Dorsolateral prefrontal cortex (tissue), 120 donors: ENCODE measurements at regions of chr9 and their contacts with region 1.

Region 1: GRCh38 chr9:37913480-37914153 is 9.7 kb upstream of the SLC25A51 start:
- DNase-seq: peak; percentile 76 to 96 (median 85)
- H3K4me3 ChIP-seq: peak overlapping the region in 2 of 59 donors; percentile 3 to 24
- H3K27ac ChIP-seq: peak overlapping the region in 40 of 59 donors; percentile 6 to 83 (median 51)
- H3K27me3 ChIP-seq: no peaks in the 10 kb centered on the region
- CTCF ChIP-seq: peak; percentile 96 to 100 (median 99)

Region 2: GRCh38 chr9:37994639-37995347 is 81.2 kb after region 1 on chr9:
- intact Hi-C with region 1: loop called in 1 of 2 experiments (anchors 5 kb)
- DNase-seq: peak; percentile 46 to 97 (median 94)
- H3K4me3 ChIP-seq: peak overlapping the region in 30 of 59 donors; percentile 2 to 46 (median 23)
- H3K27ac ChIP-seq: peak overlapping the region; percentile 82 to 99 (median 96)
- H3K27me3 ChIP-seq: no peaks in the 10 kb centered on the region
- CTCF ChIP-seq: peak in 15 of 56 donors; percentile 2 to 47 (median 26)

Region 3: DNA sequence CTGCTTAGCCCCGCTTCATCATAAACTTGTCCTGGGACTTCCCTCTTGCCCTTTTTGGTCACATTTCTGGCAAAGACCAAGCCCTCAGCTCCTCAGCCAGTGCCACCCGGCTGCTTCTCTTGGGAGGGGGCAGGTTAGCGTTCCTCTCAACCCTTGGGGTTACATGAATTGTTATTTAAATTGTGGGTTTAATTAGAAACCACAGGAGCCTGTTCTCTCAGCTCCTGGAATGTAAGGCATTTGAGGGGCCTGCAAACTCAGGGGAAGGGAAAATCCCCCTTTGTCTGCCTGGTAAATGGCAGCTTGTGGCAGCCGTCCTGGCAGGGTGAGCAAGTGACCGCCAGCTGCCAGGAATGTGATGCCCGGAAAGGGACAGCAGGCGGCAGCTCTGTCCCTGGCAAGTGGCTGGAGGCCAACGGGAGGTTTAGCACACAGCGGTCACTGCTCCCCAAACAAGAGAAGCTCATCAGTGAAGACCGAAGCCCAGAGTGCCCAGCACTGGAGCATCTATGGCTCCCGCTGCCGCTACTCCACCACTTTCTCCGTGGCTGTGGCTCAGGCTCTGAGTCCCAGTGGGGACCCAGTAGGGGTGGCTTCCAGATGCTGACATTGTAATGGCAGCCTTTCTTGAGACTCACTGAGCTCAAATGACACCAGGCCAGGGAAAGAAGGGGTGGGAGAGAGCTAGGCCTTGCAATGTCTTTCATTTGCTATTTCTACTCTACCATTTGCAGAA is 103.7 kb after region 1 on chr9:
- intact Hi-C with region 1: loop called (anchors 2 to 5 kb)
- DNase-seq: peak; percentile 76 to 91 (median 88)
- H3K4me3 ChIP-seq: peak overlapping the region in 11 of 59 donors; percentile 2 to 36 (median 11)
- H3K27ac ChIP-seq: peak overlapping the region in 57 of 59 donors; percentile 7 to 93 (median 83)
- H3K27me3 ChIP-seq: no peaks in the 10 kb centered on the region
- CTCF ChIP-seq: peak in 54 of 56 donors; percentile 16 to 85 (median 64)

Region 4: GRCh38 chr9:38068866-38069629 is 155.4 kb after region 1 on chr9 and contains the start of gene SHB:
- intact Hi-C with region 1: loop called (anchors 2 kb)
- DNase-seq: peak; percentile 53 to 86 (median 72)
- H3K4me3 ChIP-seq: peak within 1 kb of the TSS; percentile 67 to 98 (median 89)
- H3K27ac ChIP-seq: peak within 1 kb of the TSS in 58 of 59 donors; percentile 63 to 99 (median 95)
- H3K27me3 ChIP-seq: peaks cover 0 to 7% (median 0%) of the 10 kb centered on the region in 45 donors
- CTCF ChIP-seq: peak in 44 of 56 donors; percentile 6 to 72 (median 52)
- total RNA-seq, gene SHB: 6.0 to 49.5 (median 17.2) TPM

Region 5: GRCh38 chr9:38088006-38088925 is 174.6 kb after region 1 on chr9:
- intact Hi-C with region 1: loop called in 1 of 2 experiments (anchors 2 kb)
- DNase-seq: peak; percentile 57 to 85 (median 76)
- H3K4me3 ChIP-seq: no peak overlapping the region
- H3K27ac ChIP-seq: no peak overlapping the region
- H3K27me3 ChIP-seq: no peaks in the 10 kb centered on the region
- CTCF ChIP-seq: peak; percentile 78 to 99 (median 94)

Region 6: GRCh38 chr9:38160613-38161215 is 247.1 kb after region 1 on chr9:
- intact Hi-C with region 1: loop called (anchors 2 to 5 kb)
- DNase-seq: peak in 5 of 10 donors; percentile 16 to 58 (median 24)
- H3K4me3 ChIP-seq: no peak overlapping the region
- H3K27ac ChIP-seq: no peak overlapping the region
- H3K27me3 ChIP-seq: no peaks in the 10 kb centered on the region
- CTCF ChIP-seq: peak; percentile 25 to 82 (median 72)

Region 7: GRCh38 chr9:38362852-38363593 is 449.4 kb after region 1 on chr9:
- intact Hi-C with region 1: loop called (anchors 2 to 5 kb)
- DNase-seq: peak in 7 of 10 donors; percentile 23 to 68 (median 47)
- H3K4me3 ChIP-seq: peak overlapping the region in 19 of 59 donors; percentile 2 to 41 (median 20)
- H3K27ac ChIP-seq: no peak overlapping the region
- H3K27me3 ChIP-seq: no peaks in the 10 kb centered on the region
- CTCF ChIP-seq: peak; percentile 29 to 81 (median 64)